ENCODE measurements at regions of chr15 and their contacts with region 1.

Region 1: GRCh38 chr15:73950831-73951561 is 24.7 kb downstream of the LOXL1 start:
- DNase-seq: peak; percentile 88
- ATAC-seq: peak; percentile 98
- H3K4me3 Mint-ChIP-seq: no peak overlapping the region
- H3K27ac Mint-ChIP-seq: peak overlapping the region; percentile 80
- H3K4me1 Mint-ChIP-seq: peaks cover 4% of the 10 kb centered on the region
- H3K27me3 Mint-ChIP-seq: no peaks in the 10 kb centered on the region
- CTCF ChIP-seq: peak; percentile 73

Region 2: DNA sequence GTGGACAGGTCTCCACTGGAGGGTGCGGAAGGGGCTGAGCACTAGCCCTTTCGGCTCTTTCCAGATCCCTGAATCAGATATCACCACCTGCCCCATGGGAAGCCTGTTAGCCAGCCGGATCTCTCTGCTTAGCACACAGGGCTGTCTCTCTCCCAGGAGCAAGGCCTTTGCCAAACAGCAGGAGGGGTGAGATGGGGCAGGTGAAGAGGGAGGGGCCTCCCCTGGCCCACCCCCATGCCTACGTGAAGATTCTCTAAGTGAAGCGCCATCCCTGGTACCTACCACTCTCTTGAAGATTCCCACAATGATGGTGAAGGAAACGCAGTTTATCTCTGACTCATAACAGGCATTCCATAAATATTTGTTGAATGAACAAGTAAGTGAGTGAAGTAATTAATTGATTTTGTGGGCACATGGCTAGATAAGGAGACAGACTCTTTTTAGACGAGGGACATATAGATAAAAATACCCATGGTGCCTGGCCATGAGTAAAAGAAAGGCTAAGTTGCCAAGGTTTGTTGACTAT is 562.7 kb before region 1 on chr15:
- CTCF ChIA-PET with region 1: no interaction called
- POLR2A ChIA-PET with region 1: no interaction called
- intact Hi-C with region 1: no loop called
- DNase-seq: no peak
- ATAC-seq: no peak
- H3K4me3 Mint-ChIP-seq: no peak overlapping the region
- H3K27ac Mint-ChIP-seq: no peak overlapping the region
- H3K4me1 Mint-ChIP-seq: no peaks in the 10 kb centered on the region
- H3K27me3 Mint-ChIP-seq: peaks cover 13% of the 10 kb centered on the region
- CTCF ChIP-seq: no peak

Region 3: GRCh38 chr15:73882774-73883419 is 68.1 kb before region 1 on chr15:
- CTCF ChIA-PET with region 1: no interaction called
- POLR2A ChIA-PET with region 1: no interaction called
- intact Hi-C with region 1: no loop called
- DNase-seq: no peak
- ATAC-seq: no peak
- H3K4me3 Mint-ChIP-seq: no peak overlapping the region
- H3K27ac Mint-ChIP-seq: no peak overlapping the region
- H3K4me1 Mint-ChIP-seq: no peaks in the 10 kb centered on the region
- H3K27me3 Mint-ChIP-seq: peaks cover 6% of the 10 kb centered on the region
- CTCF ChIP-seq: no peak

Region 4: DNA sequence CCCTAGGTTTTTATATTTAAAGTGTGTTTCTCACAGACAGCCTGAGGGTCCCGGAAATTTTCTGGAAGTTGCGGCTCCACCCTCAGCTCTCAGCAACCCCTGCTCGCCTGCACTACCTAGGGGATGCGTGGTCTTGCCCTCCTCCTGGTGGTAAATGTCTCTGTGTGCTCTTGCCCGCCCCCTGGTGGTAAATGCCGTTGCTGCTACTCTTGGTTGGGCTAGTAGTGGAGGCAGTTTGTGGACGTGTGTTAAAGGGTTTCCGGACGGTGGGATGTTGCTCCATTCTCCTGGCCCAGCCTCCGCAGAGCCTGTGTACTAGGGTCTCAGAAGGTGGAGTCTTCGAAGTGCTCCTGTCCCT is 13.7 kb after region 1 on chr15:
- CTCF ChIA-PET with region 1: interaction called, 72 read pairs
- POLR2A ChIA-PET with region 1: interaction called, 4 read pairs
- intact Hi-C with region 1: loop called (anchors 1 kb)
- DNase-seq: peak; percentile 96
- ATAC-seq: peak; percentile 89
- H3K4me3 Mint-ChIP-seq: peak overlapping the region; percentile 71
- H3K27ac Mint-ChIP-seq: peak overlapping the region; percentile 91
- H3K4me1 Mint-ChIP-seq: peaks cover 30% of the 10 kb centered on the region
- H3K27me3 Mint-ChIP-seq: no peaks in the 10 kb centered on the region
- CTCF ChIP-seq: peak; percentile 95

Measured in activated CD8-positive, alpha-beta T cell treated with anti-CD3 and anti-CD28 coated beads for 36 hours (primary cell).